CD4-positive, alpha-beta memory T cell (primary cell): ENCODE measurements at regions of chr7 and their contacts with region 1.

Region 1: DNA sequence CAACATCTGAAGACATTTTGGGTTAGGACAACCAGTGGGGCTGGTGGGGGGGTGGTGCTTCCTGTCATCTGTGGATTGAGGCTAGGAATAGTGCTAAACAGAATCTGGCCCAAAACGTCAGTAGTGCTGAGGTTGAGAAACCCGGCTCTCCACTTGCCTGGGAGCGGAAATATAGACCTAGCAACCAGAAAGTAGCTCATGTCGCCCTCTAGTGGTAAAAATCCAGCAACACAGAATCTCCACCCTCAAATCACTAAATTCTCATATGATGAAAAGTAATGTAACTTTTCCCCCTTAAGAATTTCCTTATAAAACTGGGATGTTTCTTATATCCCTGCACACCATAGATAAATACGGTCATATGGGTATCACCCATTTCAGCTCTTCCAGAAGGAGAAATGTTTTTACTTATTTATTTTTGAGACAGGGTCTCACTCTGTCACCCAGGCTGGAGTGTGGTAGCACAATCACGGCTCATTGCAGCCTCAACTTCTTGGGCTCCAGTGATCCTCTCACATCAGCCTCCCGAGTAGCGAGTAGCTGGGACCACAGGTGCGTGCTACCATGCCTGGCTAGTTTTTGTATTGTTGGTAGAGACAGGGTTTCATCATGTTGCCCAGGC is 34.4 kb downstream of the ZC3HAV1 start:
- DNase-seq: peak; percentile 77 to 84 (median 80)
- H3K4me3 ChIP-seq: no peak overlapping the region
- H3K4me3 Mint-ChIP-seq: peak overlapping the region; percentile 53 to 75 (median 58)
- H3K27ac ChIP-seq: peak overlapping the region; percentile 27
- H3K27ac Mint-ChIP-seq: peak overlapping the region; percentile 86 to 91 (median 88)
- H3K4me1 ChIP-seq: peaks cover 61% of the 10 kb centered on the region
- H3K4me1 Mint-ChIP-seq: peaks cover 38 to 82% (median 59%) of the 10 kb centered on the region in 4 donors
- H3K27me3 ChIP-seq: no peaks in the 10 kb centered on the region
- H3K27me3 Mint-ChIP-seq: no peaks in the 10 kb centered on the region

Region 2: GRCh38 chr7:139058943-139059342 is 16.2 kb before region 1 on chr7:
- CTCF ChIA-PET with region 1: interaction called, 27 read pairs
- POLR2A ChIA-PET with region 1: interaction called, 56 read pairs
- intact Hi-C with region 1: loop called (anchors 2 kb)
- DNase-seq: no peak
- H3K4me3 ChIP-seq: no peak overlapping the region
- H3K4me3 Mint-ChIP-seq: no peak overlapping the region
- H3K27ac ChIP-seq: no peak overlapping the region
- H3K27ac Mint-ChIP-seq: peak overlapping the region in 5 of 7 donors; percentile 10 to 86 (median 70)
- H3K4me1 ChIP-seq: peaks cover 45% of the 10 kb centered on the region
- H3K4me1 Mint-ChIP-seq: peaks cover 36 to 50% (median 42%) of the 10 kb centered on the region in 4 donors
- H3K27me3 ChIP-seq: no peaks in the 10 kb centered on the region
- H3K27me3 Mint-ChIP-seq: no peaks in the 10 kb centered on the region

Region 3: DNA sequence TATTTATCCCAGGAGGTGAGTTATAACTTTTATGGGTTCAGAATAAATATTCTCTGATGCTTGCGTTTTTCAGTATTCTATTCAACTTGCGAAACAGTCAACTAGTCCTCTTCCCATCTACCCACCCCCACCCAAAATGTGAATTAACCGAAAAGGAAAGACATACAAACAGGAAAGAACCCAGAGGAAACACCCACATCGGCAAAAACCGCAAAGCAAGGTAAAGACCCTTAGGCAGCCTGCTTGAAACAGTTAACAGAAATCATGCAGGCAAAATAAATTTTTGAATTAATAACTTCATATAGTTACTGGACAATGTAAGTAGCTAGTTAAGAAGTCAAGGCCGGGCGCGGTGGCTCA is 28.9 kb after region 1 on chr7:
- CTCF ChIA-PET with region 1: interaction called, 12 read pairs
- POLR2A ChIA-PET with region 1: interaction called, 244 read pairs
- intact Hi-C with region 1: loop called (anchors 1 kb)
- DNase-seq: peak in 2 of 5 donors; percentile 43 to 64
- H3K4me3 ChIP-seq: peak overlapping the region; percentile 27 to 96
- H3K4me3 Mint-ChIP-seq: peak overlapping the region; percentile 95 to 98 (median 97)
- H3K27ac ChIP-seq: peak overlapping the region; percentile 42
- H3K27ac Mint-ChIP-seq: peak overlapping the region; percentile 84 to 96 (median 92)
- H3K4me1 ChIP-seq: peaks cover 29% of the 10 kb centered on the region
- H3K4me1 Mint-ChIP-seq: peaks cover 12 to 55% (median 23%) of the 10 kb centered on the region in 4 donors
- H3K27me3 ChIP-seq: no peaks in the 10 kb centered on the region
- H3K27me3 Mint-ChIP-seq: no peaks in the 10 kb centered on the region

Region 4: GRCh38 chr7:139124084-139124914 is 49.2 kb after region 1 on chr7:
- CTCF ChIA-PET with region 1: interaction called, 26 read pairs
- POLR2A ChIA-PET with region 1: interaction called, 6 read pairs
- intact Hi-C with region 1: loop called (anchors 1 kb)
- DNase-seq: no peak
- H3K4me3 ChIP-seq: no peak overlapping the region
- H3K4me3 Mint-ChIP-seq: peak overlapping the region in 1 of 8 donors; percentile 40
- H3K27ac ChIP-seq: no peak overlapping the region
- H3K27ac Mint-ChIP-seq: no peak overlapping the region
- H3K4me1 ChIP-seq: peaks cover 12% of the 10 kb centered on the region
- H3K4me1 Mint-ChIP-seq: peaks cover 7 to 31% (median 12%) of the 10 kb centered on the region in 4 donors
- H3K27me3 ChIP-seq: no peaks in the 10 kb centered on the region
- H3K27me3 Mint-ChIP-seq: no peaks in the 10 kb centered on the region